ENCODE measurements at regions of chr15 and their contacts with region 1.

Region 1: GRCh38 chr15:40857601-40858341 is 13.9 kb downstream of the SPINT1 start:
- DNase-seq: no peak
- ATAC-seq: peak; percentile 85
- H3K4me3 ChIP-seq: no peak overlapping the region
- H3K27ac ChIP-seq: peak overlapping the region; percentile 52
- H3K4me1 ChIP-seq: peaks cover 16 to 26% of the 10 kb centered on the region in 2 experiments
- H3K27me3 ChIP-seq: no peaks in the 10 kb centered on the region
- CTCF ChIP-seq: peak; percentile 79 to 99 (median 94)
- POLR2A ChIP-seq: no peak
- RAD21 ChIP-seq: peak; percentile 81

Region 2: GRCh38 chr15:40847205-40847961 is 10.4 kb before region 1 on chr15:
- CTCF ChIA-PET with region 1: interaction called, 61 read pairs
- POLR2A ChIA-PET with region 1: interaction called, 13 read pairs
- RAD21 ChIA-PET with region 1: no interaction called
- intact Hi-C with region 1: no loop called
- DNase-seq: no peak
- ATAC-seq: peak; percentile 46
- H3K4me3 ChIP-seq: peak overlapping the region; percentile 6 to 95; a peak in 3 of 4 replicates
- H3K27ac ChIP-seq: peak overlapping the region; percentile 93
- H3K4me1 ChIP-seq: peaks cover 34 to 45% of the 10 kb centered on the region in 2 experiments
- H3K27me3 ChIP-seq: no peaks in the 10 kb centered on the region
- CTCF ChIP-seq: no peak
- POLR2A ChIP-seq: no peak
- RAD21 ChIP-seq: no peak

Region 3: GRCh38 chr15:40873625-40874561 is 16.1 kb after region 1 on chr15 and contains the start of gene RHOV:
- CTCF ChIA-PET with region 1: interaction called, 94 read pairs
- POLR2A ChIA-PET with region 1: interaction called, 20 read pairs
- RAD21 ChIA-PET with region 1: interaction called, 4 to 13 read pairs
- intact Hi-C with region 1: no loop called
- DNase-seq: peak; percentile 67
- ATAC-seq: peak; percentile 94
- H3K4me3 ChIP-seq: peak within 1 kb of the TSS; percentile 56 to 72
- H3K27ac ChIP-seq: peak within 1 kb of the TSS; percentile 74
- H3K4me1 ChIP-seq: peaks cover 36 to 48% of the 10 kb centered on the region in 2 experiments
- H3K27me3 ChIP-seq: no peaks in the 10 kb centered on the region
- CTCF ChIP-seq: peak; percentile 42 to 59 (median 43); a peak in 5 of 6 replicates
- POLR2A ChIP-seq: peak; percentile 84
- RAD21 ChIP-seq: peak; percentile 49
- total RNA-seq, gene RHOV: 6.0 TPM

Region 4: GRCh38 chr15:40886586-40886985 is 28.8 kb after region 1 on chr15:
- CTCF ChIA-PET with region 1: interaction called, 152 read pairs
- POLR2A ChIA-PET with region 1: interaction called, 19 read pairs
- RAD21 ChIA-PET with region 1: interaction called, 28 to 29 read pairs
- intact Hi-C with region 1: no loop called
- DNase-seq: no peak
- ATAC-seq: no peak
- H3K4me3 ChIP-seq: no peak overlapping the region
- H3K27ac ChIP-seq: no peak overlapping the region
- H3K4me1 ChIP-seq: peaks cover 0 to 2% of the 10 kb centered on the region in 2 experiments; a peak in 1 of 4 replicates
- H3K27me3 ChIP-seq: no peaks in the 10 kb centered on the region
- CTCF ChIP-seq: no peak
- POLR2A ChIP-seq: no peak
- RAD21 ChIP-seq: no peak

Region 5: GRCh38 chr15:41180206-41180789 is 322.5 kb after region 1 on chr15:
- CTCF ChIA-PET with region 1: interaction called, 15 read pairs
- POLR2A ChIA-PET with region 1: no interaction called
- RAD21 ChIA-PET with region 1: no interaction called
- intact Hi-C with region 1: no loop called
- DNase-seq: no peak
- ATAC-seq: no peak
- H3K4me3 ChIP-seq: no peak overlapping the region
- H3K27ac ChIP-seq: no peak overlapping the region
- H3K4me1 ChIP-seq: peaks cover 2 to 8% of the 10 kb centered on the region in 2 experiments; a peak in 1 of 4 replicates
- H3K27me3 ChIP-seq: no peaks in the 10 kb centered on the region
- CTCF ChIP-seq: no peak
- POLR2A ChIP-seq: no peak
- RAD21 ChIP-seq: no peak

Measured in HCT116 (cell line).